Caco-2 (cell line): ENCODE measurements at regions of chr3 and their contacts with region 1.

Region 1: DNA sequence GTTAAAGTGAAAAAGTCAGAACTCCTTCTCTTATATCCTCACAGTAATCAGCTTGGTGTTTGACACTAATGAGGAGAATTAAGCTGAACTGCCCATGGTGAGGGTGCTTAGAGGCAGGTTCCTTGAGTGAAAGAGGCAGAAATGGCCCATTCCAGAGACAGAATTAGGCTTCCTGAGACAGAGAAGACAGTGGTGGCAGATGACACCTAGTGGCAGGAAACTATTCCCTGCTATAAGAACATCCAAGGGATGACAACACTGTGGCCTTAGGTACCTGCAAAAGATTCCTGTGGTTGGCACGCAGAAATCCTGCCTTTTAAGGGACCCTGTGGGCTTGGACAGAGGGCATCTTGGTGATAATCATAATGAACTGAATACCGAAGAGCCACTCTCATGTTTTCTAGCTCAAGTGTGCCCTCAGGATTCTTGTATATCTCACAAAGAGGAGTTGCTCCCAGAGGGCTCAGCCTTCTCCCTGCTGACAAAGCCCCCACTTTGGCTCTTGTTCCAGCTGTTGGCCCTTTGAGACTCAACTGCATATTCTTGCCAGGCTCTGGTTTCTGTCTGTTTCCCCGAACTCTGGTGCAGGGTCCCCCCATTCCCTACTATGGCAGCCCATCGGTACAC is 56.0 kb downstream of the KBTBD12 start:
- DNase-seq: peak in 1 of 2 experiments; percentile 53
- H3K4me3 ChIP-seq: no peak overlapping the region
- H3K4me3 Mint-ChIP-seq: no peak overlapping the region
- H3K27ac Mint-ChIP-seq: no peak overlapping the region
- H3K4me1 ChIP-seq: no peaks in the 10 kb centered on the region
- H3K4me1 Mint-ChIP-seq: no peaks in the 10 kb centered on the region
- H3K27me3 ChIP-seq: 0 out of 2 replicates have a peak, but pooled peaks cover 2% of the 10 kb centered on the region
- H3K27me3 Mint-ChIP-seq: peaks cover 11% of the 10 kb centered on the region
- CTCF ChIP-seq: peak; percentile 57 to 81

Region 2: GRCh38 chr3:127590593-127591477 is 380.2 kb before region 1 on chr3 and contains the start of gene TPRA1:
- CTCF ChIA-PET with region 1: no interaction called
- POLR2A ChIA-PET with region 1: no interaction called
- intact Hi-C with region 1: loop called (anchors 5 kb)
- DNase-seq: peak; percentile 94 to 96
- H3K4me3 ChIP-seq: peak within 1 kb of the TSS; percentile 88
- H3K4me3 Mint-ChIP-seq: peak within 1 kb of the TSS; percentile 87
- H3K27ac Mint-ChIP-seq: peak within 1 kb of the TSS; percentile 90
- H3K4me1 ChIP-seq: peaks cover 19% of the 10 kb centered on the region
- H3K4me1 Mint-ChIP-seq: peaks cover 26% of the 10 kb centered on the region
- H3K27me3 ChIP-seq: no peaks in the 10 kb centered on the region
- H3K27me3 Mint-ChIP-seq: no peaks in the 10 kb centered on the region
- CTCF ChIP-seq: peak in 1 of 2 experiments; percentile 34
- total RNA-seq, gene TPRA1: 34.5 and 36.8 TPM in 2 replicates

Region 3: DNA sequence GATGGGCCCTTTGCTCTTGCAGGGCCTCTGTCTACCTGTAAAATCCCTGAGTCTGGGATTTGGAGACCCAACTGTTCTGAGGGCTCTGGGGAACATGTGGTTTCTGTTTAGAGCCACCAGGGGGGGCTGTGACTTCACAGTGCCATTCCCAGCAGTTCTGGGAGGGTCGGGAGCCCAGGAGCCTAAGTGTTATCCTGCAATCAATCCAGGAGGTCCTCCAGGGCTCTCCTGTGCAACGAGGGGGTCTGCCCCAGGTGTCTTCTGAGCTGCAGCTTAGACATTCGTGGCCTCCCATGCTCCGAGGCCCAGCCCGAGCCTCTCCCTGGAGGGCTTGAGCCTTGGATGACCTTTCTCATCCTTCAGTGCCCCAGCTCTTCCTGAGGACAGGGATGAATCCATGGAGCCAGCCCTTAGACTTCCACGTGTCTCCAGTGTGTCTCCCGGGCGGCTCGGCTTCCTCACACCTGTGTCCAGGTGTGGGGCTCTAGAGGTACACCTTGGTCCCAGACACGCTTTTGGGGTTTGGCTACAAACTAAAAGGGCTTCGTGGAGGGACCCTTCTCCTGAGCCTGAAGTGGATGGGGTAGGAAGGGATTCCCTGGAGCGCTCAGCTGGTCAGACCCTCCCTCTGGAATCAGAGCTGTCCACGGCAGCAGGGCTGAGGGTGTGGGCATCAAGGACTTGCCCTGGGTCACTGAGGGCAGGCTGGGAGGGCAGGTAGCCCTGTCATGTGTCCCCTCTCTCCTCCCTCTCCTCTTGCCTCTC is 318.7 kb before region 1 on chr3:
- CTCF ChIA-PET with region 1: no interaction called
- POLR2A ChIA-PET with region 1: no interaction called
- intact Hi-C with region 1: loop called (anchors 1 kb)
- DNase-seq: peak in 1 of 2 experiments; percentile 69
- H3K4me3 ChIP-seq: no peak overlapping the region
- H3K4me3 Mint-ChIP-seq: no peak overlapping the region
- H3K27ac Mint-ChIP-seq: peak overlapping the region; percentile 41
- H3K4me1 ChIP-seq: no peaks in the 10 kb centered on the region
- H3K4me1 Mint-ChIP-seq: no peaks in the 10 kb centered on the region
- H3K27me3 ChIP-seq: no peaks in the 10 kb centered on the region
- H3K27me3 Mint-ChIP-seq: no peaks in the 10 kb centered on the region
- CTCF ChIP-seq: peak; percentile 71 to 77

Region 4: DNA sequence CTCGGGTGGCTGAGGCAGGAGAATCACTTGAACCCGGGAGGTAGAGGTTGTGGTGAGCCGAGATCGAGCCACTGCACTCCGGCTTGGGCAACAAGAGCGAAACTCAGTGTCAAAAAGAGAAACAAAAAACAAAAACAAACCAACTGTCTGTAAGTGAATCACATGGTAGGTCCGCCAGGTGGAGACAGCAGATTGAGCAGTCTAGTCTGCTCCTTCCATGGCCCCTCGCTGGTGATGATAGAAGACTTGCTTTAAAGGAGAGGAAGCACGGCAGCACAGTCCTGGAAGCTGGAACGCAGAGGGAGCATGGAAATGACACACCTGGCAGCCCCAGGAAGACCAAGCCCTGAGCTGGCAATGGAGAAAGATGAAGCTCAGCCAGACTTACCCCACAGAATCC is 117.4 kb before region 1 on chr3:
- CTCF ChIA-PET with region 1: no interaction called
- POLR2A ChIA-PET with region 1: no interaction called
- intact Hi-C with region 1: loop called (anchors 1 kb)
- DNase-seq: peak; percentile 32 to 43
- H3K4me3 ChIP-seq: no peak overlapping the region
- H3K4me3 Mint-ChIP-seq: no peak overlapping the region
- H3K27ac Mint-ChIP-seq: no peak overlapping the region
- H3K4me1 ChIP-seq: no peaks in the 10 kb centered on the region
- H3K4me1 Mint-ChIP-seq: no peaks in the 10 kb centered on the region
- H3K27me3 ChIP-seq: no peaks in the 10 kb centered on the region
- H3K27me3 Mint-ChIP-seq: no peaks in the 10 kb centered on the region
- CTCF ChIP-seq: no peak